A549 (cell line): ENCODE measurements at regions of chrX and their contacts with region 1.

Region 1: DNA sequence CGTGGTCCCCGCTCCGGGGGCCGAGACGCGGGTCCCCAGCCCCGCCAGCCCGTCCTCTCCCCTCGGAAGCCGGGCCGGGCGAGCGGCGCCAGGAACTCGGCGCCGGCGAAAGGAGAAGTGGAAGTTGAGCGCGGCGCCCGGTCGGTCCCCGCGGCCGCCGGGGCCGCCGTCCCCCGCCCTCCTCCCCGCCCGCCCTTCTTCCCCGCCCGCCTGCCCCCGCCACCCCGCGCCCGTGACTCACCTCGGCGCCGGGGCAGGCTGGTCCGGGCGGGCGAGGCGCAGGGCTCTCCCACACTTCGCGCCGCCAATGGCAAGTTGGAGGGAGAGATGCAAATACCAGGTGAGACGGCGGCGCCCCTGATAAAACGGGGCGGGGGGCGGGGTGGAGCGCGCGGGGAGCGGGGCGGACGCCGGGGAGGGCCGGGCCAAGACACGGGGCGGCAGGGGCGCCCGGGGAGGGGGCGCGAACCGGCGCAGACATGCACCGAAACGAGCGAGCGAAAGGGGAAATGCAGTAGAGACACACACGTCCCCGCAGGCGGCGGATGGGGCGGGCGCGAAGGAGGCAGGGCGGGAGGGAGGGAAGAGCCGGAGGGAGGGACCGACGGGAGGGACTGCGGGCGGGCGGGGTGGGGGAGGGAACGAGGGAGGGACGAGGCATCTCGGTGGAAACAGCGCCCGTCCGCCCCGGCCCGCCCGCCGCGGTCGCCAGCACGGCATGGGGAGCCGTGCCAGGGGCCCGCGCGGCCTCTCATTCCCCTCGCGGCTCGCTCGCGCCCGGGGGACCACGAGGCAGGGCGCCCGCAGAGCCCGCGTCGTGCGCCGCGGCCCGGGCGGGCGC is at the start of gene ELF4:
- DNase-seq: peak; percentile 65 to 70
- ATAC-seq: peak; percentile 51 to 71
- H3K4me3 ChIP-seq: peak within 1 kb of the TSS; percentile 98
- H3K27ac ChIP-seq: peak within 1 kb of the TSS; percentile 85 to 98
- H3K4me1 ChIP-seq: peaks cover 41% of the 10 kb centered on the region
- CTCF ChIP-seq: 0 out of 3 replicates have a peak, but pooled peaks have one; percentile 16
- EP300 ChIP-seq: no peak
- POLR2A ChIP-seq: peak; percentile 14; the same call in 1 of the 2 replicates
- RAD21 ChIP-seq: no peak
- polyA plus RNA-seq, gene ELF4: 18.0 and 18.4 TPM in 2 replicates

Region 2: GRCh38 chrX:130120746-130121504 is 10.3 kb after region 1 on chrX:
- CTCF ChIA-PET with region 1: interaction called, 10 read pairs
- POLR2A ChIA-PET with region 1: interaction called, 3 read pairs
- DNase-seq: peak; percentile 73 to 84
- ATAC-seq: peak; percentile 91 to 92
- H3K4me3 ChIP-seq: peak overlapping the region; percentile 46
- H3K27ac ChIP-seq: peak overlapping the region; percentile 94 to 100
- H3K4me1 ChIP-seq: peaks cover 30% of the 10 kb centered on the region
- CTCF ChIP-seq: peak; percentile 70
- EP300 ChIP-seq: no peak
- POLR2A ChIP-seq: no peak
- RAD21 ChIP-seq: peak; percentile 38 to 58; a peak in 4 of 5 replicates

Region 3: GRCh38 chrX:130130990-130131389 is 20.4 kb after region 1 on chrX:
- CTCF ChIA-PET with region 1: no interaction called
- POLR2A ChIA-PET with region 1: no interaction called
- DNase-seq: no peak
- ATAC-seq: no peak
- H3K4me3 ChIP-seq: no peak overlapping the region
- H3K27ac ChIP-seq: no peak overlapping the region
- H3K4me1 ChIP-seq: no peaks in the 10 kb centered on the region
- CTCF ChIP-seq: no peak
- EP300 ChIP-seq: no peak
- POLR2A ChIP-seq: no peak
- RAD21 ChIP-seq: no peak